AG04449 (cell line): ENCODE measurements at regions of chr2 and their contacts with region 1.

Region 1: DNA sequence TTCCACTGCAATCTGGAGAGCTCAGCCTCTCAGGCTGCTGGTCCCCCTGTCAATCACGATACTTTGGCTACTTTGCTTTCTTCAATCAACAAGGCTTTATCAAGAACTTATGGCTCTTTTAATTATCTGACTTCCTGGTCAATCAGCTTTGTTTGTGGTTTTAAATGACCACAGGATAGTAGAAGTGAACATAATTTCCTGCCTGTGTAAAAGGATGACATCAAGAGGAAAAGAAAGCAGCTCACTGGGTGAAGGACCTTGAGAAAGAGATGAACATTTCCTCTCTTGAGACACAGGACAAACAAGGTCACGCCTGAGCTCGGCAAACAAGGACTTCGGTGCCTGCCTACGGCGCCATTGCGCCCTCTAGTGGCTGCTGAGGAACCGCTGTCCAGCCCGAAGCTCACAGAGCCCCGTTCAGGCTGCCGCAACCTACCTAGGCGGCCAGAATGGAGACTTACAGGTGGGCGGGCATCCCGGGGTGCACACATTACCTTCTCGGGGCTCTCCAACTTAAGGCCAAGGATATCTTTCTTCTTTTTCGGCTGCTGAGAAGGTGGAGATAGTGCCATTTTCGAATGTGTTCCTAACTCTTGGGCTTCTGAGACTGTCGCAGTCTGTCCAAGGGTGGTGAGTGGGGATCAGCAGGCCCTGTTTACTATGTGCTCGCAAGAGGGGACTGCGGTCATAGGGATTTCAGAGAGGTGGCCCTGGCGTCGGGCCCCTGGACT is 54.0 kb downstream of the IL1RL2 start:
- DNase-seq: peak; percentile 92
- H3K4me3 ChIP-seq: no peak overlapping the region
- CTCF ChIP-seq: peak; percentile 99

Region 2: DNA sequence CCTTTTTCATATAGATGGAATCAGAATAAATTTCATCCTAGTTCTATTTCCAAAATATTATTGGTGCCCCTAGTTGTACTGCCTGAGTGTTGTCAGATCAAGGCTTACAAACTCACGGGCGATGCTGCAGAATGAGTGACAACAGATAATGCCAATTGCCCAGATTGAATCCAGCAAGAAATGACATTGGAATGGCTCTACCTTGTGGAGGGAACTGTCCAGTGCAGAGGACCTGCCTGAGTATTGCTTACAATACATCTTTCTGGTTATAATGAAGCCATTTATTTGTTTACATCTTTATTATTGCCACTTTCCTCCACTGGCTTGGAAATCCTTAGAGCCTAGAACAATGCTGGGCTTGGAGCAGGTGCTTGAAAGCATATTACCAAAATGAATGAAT is 256.9 kb before region 1 on chr2:
- CTCF ChIA-PET with region 1: interaction called, 10 read pairs
- POLR2A ChIA-PET with region 1: no interaction called
- DNase-seq: no peak
- H3K4me3 ChIP-seq: no peak overlapping the region
- CTCF ChIP-seq: peak; percentile 8

Region 3: DNA sequence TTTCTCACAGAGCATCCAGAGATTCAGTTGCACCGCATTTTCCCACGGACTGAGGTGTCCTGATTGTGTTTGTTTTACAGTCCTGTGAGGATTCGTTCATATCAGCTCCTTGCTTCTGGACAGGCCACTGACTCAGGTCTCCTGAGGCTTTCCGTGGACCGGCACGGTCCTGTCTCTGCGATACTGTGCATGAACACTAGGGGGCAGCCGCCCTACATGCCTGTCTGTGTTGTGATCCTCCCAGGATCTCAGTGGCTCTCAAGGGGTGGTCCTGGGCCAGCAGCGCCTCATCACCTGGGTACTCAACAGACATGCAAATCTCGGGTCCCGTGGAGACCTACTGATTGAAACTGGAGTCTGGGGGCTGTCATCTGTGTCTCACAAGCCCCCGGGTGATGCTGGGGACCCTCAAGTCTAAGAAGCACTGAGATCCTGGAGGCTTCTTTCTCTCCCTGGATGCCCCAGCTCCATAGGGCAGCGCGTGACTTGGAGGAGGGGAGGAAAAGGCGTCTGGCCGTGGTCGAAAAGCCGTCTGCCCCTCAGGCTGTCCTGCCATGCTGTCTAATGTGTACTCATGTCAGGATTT is 220.1 kb before region 1 on chr2:
- CTCF ChIA-PET with region 1: interaction called, 206 read pairs
- POLR2A ChIA-PET with region 1: no interaction called
- DNase-seq: no peak
- H3K4me3 ChIP-seq: no peak overlapping the region
- CTCF ChIP-seq: peak; percentile 98

Region 4: GRCh38 chr2:102166189-102166845 is 74.5 kb before region 1 on chr2:
- CTCF ChIA-PET with region 1: interaction called, 53 read pairs
- POLR2A ChIA-PET with region 1: no interaction called
- DNase-seq: peak; percentile 42
- H3K4me3 ChIP-seq: no peak overlapping the region
- CTCF ChIP-seq: peak; percentile 56

Region 5: GRCh38 chr2:102251042-102251848 is 10.4 kb after region 1 on chr2:
- CTCF ChIA-PET with region 1: interaction called, 97 read pairs
- POLR2A ChIA-PET with region 1: interaction called, 3 read pairs
- DNase-seq: no peak
- H3K4me3 ChIP-seq: peak overlapping the region; percentile 52
- CTCF ChIP-seq: peak; percentile 58

Region 6: GRCh38 chr2:102449370-102449974 is 208.7 kb after region 1 on chr2:
- CTCF ChIA-PET with region 1: interaction called, 29 read pairs
- POLR2A ChIA-PET with region 1: no interaction called
- DNase-seq: no peak
- H3K4me3 ChIP-seq: no peak overlapping the region
- CTCF ChIP-seq: peak; percentile 52

Region 7: DNA sequence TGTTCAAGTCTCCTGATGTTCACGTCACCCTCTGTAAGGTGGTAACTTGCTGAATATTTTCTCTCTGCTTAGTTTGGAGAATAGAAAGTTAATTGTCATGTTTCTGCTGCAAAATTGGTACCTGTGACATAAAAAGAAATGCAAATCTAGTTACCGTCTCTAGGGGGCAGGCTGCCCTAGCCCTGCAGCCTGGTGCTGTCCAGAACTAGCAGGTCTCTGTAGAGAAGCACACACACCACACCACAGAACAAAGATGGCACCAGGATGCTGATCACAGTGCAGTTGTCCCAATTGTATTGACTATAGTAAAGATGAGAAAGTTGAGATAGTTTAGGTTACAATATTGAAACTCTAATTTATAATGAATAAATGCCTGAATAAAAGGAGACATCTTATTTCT is 279.2 kb after region 1 on chr2:
- CTCF ChIA-PET with region 1: no interaction called
- POLR2A ChIA-PET with region 1: no interaction called
- DNase-seq: no peak
- H3K4me3 ChIP-seq: no peak overlapping the region
- CTCF ChIP-seq: peak; percentile 46